SK-N-SH (cell line): ENCODE measurements at regions of chr19 and their contacts with region 1.

Region 1: DNA sequence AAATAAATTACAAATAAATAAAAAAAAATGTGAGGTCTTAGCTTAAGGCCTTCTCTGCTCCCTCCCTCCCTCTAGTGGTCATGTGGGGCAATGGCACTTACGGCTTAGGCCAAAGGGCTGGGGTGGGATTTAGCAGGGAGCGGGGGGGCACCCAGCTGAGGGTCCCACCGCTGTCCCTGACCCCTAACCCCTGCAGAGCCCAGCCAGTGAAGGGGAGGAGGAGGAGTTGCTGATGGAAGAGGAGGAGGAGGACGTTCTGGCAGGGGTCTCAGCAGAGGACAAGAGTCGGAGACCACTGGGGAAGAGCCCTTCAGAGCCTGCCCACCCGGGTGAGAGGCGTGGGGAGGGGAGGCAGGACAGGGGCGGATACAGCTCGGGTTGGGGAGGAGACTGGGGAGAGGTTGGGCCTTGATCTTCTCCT is 9.3 kb downstream of the MPND start:
- DNase-seq: peak; percentile 88
- H3K4me3 ChIP-seq: peak overlapping the region in 1 of 2 experiments; percentile 41; a peak in 1 of 4 replicates
- H3K27ac ChIP-seq: no peak overlapping the region; a peak in 1 of 4 replicates
- H3K4me1 ChIP-seq: no peaks in the 10 kb centered on the region
- H3K27me3 ChIP-seq: no peaks in the 10 kb centered on the region
- CTCF ChIP-seq: peak; percentile 76
- EP300 ChIP-seq: no peak
- RAD21 ChIP-seq: peak; percentile 69

Region 2: DNA sequence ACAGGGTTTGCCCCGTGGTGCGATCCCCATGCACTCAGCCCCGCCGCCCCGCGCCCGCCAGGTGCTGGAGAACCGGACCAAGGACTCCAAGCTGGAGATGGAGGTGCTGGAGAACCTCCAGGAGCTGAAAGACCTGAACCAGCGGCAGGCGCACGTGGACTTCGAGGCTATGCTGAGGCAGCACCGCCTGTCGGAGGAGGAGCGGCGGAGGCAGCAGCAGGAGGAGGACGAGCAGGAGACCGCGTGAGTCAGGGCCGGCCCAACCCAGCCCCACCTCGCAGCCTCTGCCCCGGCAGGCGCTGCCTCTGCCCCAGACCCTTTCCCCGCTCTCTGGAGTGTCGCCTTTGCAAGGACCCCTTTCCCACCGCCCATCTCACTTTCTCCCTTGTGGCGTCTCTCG is 94.5 kb before region 1 on chr19:
- CTCF ChIA-PET with region 1: interaction called, 11 read pairs
- POLR2A ChIA-PET with region 1: no interaction called
- DNase-seq: no peak
- H3K4me3 ChIP-seq: no peak overlapping the region
- H3K27ac ChIP-seq: no peak overlapping the region
- H3K4me1 ChIP-seq: no peaks in the 10 kb centered on the region
- H3K27me3 ChIP-seq: no peaks in the 10 kb centered on the region
- CTCF ChIP-seq: no peak
- EP300 ChIP-seq: no peak
- RAD21 ChIP-seq: no peak

Region 3: DNA sequence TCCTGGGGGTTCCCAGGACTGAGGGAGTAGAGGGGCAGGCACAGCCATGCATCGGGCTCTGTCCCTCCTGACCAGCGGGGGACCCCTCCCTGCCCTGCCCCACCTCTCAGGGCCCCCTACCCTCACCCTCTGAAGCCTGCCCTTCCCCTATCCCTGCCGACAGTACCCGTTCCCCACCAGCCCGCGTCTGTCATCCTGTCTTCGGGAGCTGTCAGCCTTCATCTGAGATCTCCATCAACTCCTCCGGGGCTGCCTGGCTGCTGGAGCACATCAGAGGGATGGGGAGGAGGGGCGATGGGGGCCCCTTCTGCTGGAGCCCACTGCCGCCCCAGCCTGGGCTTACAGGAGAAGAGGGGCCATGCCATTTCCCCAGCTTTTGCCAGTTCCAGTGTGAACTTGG is 79.8 kb before region 1 on chr19:
- CTCF ChIA-PET with region 1: interaction called, 130 read pairs
- POLR2A ChIA-PET with region 1: no interaction called
- DNase-seq: peak; percentile 58
- H3K4me3 ChIP-seq: no peak overlapping the region
- H3K27ac ChIP-seq: no peak overlapping the region
- H3K4me1 ChIP-seq: peaks cover 0 to 15% of the 10 kb centered on the region in 2 experiments; a peak in 1 of 4 replicates
- H3K27me3 ChIP-seq: no peaks in the 10 kb centered on the region
- CTCF ChIP-seq: no peak
- EP300 ChIP-seq: no peak
- RAD21 ChIP-seq: no peak

Region 4: GRCh38 chr19:4278419-4279266 is 74.1 kb before region 1 on chr19 and contains the start of gene SHD:
- CTCF ChIA-PET with region 1: interaction called, 36 read pairs
- POLR2A ChIA-PET with region 1: no interaction called
- DNase-seq: peak; percentile 92
- H3K4me3 ChIP-seq: peak within 1 kb of the TSS; percentile 49 to 50; a peak in 3 of 4 replicates
- H3K27ac ChIP-seq: peak within 1 kb of the TSS; percentile 50 to 99; a peak in 3 of 4 replicates
- H3K4me1 ChIP-seq: peaks cover 0 to 12% of the 10 kb centered on the region in 2 experiments; a peak in 1 of 4 replicates
- H3K27me3 ChIP-seq: peaks cover 12% of the 10 kb centered on the region
- CTCF ChIP-seq: no peak
- EP300 ChIP-seq: peak in 1 of 2 experiments; percentile 87; a peak in 1 of 4 replicates
- RAD21 ChIP-seq: no peak
- polyA plus RNA-seq, gene SHD: 3.1 and 6.9 TPM in 2 replicates

Region 5: GRCh38 chr19:4362861-4363510 is 10.3 kb after region 1 on chr19:
- CTCF ChIA-PET with region 1: interaction called, 84 read pairs
- POLR2A ChIA-PET with region 1: interaction called, 5 read pairs
- DNase-seq: no peak
- H3K4me3 ChIP-seq: no peak overlapping the region
- H3K27ac ChIP-seq: no peak overlapping the region; a peak in 1 of 4 replicates
- H3K4me1 ChIP-seq: peaks cover under 1 to 6% of the 10 kb centered on the region in 2 experiments; a peak in 1 of 4 replicates
- H3K27me3 ChIP-seq: no peaks in the 10 kb centered on the region
- CTCF ChIP-seq: peak; percentile 21; the same call in 1 of the 2 replicates
- EP300 ChIP-seq: no peak
- RAD21 ChIP-seq: peak; percentile 18; the same call in 1 of the 2 replicates

Region 6: GRCh38 chr19:4369888-4370260 is 17.2 kb after region 1 on chr19:
- CTCF ChIA-PET with region 1: interaction called, 84 read pairs
- POLR2A ChIA-PET with region 1: no interaction called
- DNase-seq: no peak
- H3K4me3 ChIP-seq: no peak overlapping the region
- H3K27ac ChIP-seq: peak overlapping the region in 1 of 2 experiments; percentile 22; a peak in 1 of 4 replicates
- H3K4me1 ChIP-seq: peaks cover 15 to 51% of the 10 kb centered on the region in 2 experiments; a peak in 3 of 4 replicates
- H3K27me3 ChIP-seq: no peaks in the 10 kb centered on the region
- CTCF ChIP-seq: no peak
- EP300 ChIP-seq: no peak
- RAD21 ChIP-seq: peak; percentile 33

Region 7: DNA sequence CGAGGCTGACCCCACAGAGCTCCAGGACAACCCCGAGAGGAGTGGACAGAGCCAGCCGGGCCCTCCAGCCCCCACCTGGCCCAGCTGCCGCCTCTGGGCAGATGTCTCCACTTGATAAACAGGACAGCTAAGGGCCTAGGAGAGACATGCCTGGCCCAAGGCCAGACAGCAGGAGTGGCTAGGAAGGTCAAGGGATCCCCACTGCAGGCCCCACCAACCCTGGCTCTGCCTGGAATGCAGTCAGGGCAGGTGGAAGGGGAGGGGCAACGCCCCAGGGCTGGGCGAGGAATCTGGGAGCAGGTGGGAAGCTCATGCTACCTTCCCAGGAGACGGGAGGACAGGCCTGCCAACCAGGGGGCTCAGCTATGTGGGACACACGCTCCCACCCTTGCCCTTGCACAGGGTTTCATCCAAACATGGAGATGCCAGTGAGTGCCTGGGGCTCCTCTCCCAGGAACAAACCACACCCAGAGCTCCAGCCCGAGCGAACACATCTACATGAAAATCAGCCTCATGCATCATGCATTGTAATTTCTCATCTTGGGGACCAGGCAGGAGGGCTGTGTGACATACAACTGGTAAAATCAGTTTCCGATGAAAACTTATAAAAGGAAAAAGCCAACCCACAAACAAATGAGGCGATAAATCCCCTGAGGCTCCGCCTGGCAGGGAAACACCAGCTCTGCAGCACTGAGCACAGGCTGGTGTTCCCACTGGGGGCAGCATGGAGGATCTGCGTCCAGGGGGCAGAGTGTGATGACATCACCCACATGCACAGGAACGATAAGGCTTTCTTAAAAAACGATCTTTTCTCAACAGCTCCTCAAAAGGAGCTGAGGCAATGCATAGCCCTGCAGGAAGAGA is 22.7 kb after region 1 on chr19:
- CTCF ChIA-PET with region 1: interaction called, 16 read pairs
- POLR2A ChIA-PET with region 1: no interaction called
- DNase-seq: peak; percentile 73
- H3K4me3 ChIP-seq: no peak overlapping the region
- H3K27ac ChIP-seq: peak overlapping the region; percentile 80 to 92
- H3K4me1 ChIP-seq: peaks cover 33 to 72% of the 10 kb centered on the region in 2 experiments
- H3K27me3 ChIP-seq: no peaks in the 10 kb centered on the region
- CTCF ChIP-seq: peak; percentile 52
- EP300 ChIP-seq: 0 out of 4 replicates have a peak, but pooled peaks of 1 of the 2 experiments have one; percentile 35
- RAD21 ChIP-seq: no peak